IMR-90 (cell line): ENCODE measurements at regions of chr12 and their contacts with region 1.

Region 1: DNA sequence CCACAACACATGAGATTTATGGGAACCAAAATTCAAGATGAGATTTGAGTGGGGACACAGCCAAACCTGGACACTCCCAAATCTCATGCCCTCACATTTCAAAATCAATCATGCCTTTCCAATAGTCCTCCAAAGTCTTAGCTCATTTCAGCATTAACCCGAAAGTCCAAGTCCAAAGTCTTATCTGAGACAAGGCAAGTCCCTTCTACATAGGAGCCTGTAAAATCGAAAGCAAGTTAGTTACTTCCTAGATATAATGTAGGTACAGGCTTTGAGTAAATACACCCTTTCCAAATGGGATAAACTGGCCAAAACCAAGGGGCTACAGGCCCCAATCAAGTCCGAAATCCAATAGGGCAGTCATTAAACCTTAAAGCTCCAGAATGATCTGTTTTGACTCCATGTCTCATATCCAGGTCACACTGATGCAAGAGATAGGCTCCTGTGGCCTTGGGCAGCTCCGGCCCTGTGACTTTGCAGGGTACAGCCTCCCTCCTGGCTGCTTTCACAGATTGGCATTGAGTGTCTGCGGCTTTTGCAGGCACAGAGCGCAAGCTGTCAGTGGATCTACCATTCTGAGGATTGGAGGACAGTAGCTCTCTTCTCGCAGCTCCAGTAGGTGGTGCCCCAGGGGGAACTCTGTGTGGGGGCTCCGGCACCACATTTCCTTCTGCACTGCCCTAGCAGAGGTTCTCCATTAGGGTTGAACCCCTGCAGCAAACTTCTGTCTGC is 60.1 kb downstream of the LRIG3 start:
- DNase-seq: no peak
- ATAC-seq: peak; percentile 14; the same call in 1 of the 2 replicates
- H3K4me3 ChIP-seq: no peak overlapping the region
- H3K27ac ChIP-seq: no peak overlapping the region
- H3K4me1 ChIP-seq: no peaks in the 10 kb centered on the region
- H3K27me3 ChIP-seq: no peaks in the 10 kb centered on the region
- CTCF ChIP-seq: no peak
- POLR2A ChIP-seq: no peak
- RAD21 ChIP-seq: no peak

Region 2: DNA sequence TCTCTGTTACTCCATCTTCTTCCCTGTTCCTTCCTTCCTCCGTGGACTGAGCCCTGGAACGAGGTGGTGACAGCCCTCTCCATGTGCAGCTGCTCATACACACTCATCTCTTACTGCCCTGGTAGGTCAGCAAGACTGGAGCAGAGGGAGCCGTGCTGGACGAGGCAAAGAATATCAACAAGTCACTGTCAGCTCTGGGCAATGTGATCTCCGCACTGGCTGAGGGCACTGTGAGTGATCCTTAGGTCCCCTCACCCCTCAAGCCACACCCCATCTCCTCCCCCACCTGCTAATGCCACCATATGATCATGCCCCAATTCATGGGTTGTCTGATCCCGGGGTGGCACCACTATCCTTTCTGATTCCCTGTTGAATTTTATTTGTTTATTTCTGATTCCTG is 1291.4 kb before region 1 on chr12:
- CTCF ChIA-PET with region 1: no interaction called
- POLR2A ChIA-PET with region 1: no interaction called
- dilution Hi-C with region 1: no loop called
- in situ Hi-C with region 1: no loop called
- intact Hi-C with region 1: loop called (anchors 10 kb)
- DNase-seq: no peak
- ATAC-seq: no peak
- H3K4me3 ChIP-seq: no peak overlapping the region
- H3K27ac ChIP-seq: no peak overlapping the region
- H3K4me1 ChIP-seq: no peaks in the 10 kb centered on the region
- H3K27me3 ChIP-seq: peaks cover 17% of the 10 kb centered on the region
- CTCF ChIP-seq: no peak
- POLR2A ChIP-seq: no peak
- RAD21 ChIP-seq: no peak